AG04450 (cell line): ENCODE measurements at regions of chr6 and their contacts with region 1.

Region 1: GRCh38 chr6:2448820-2449571 is 203.6 kb upstream of the GMDS start:
- DNase-seq: peak; percentile 63
- H3K4me3 ChIP-seq: peak overlapping the region; percentile 41
- H3K27ac ChIP-seq: no peak overlapping the region
- H3K27me3 ChIP-seq: peaks cover 11% of the 10 kb centered on the region
- CTCF ChIP-seq: peak; percentile 83

Region 2: DNA sequence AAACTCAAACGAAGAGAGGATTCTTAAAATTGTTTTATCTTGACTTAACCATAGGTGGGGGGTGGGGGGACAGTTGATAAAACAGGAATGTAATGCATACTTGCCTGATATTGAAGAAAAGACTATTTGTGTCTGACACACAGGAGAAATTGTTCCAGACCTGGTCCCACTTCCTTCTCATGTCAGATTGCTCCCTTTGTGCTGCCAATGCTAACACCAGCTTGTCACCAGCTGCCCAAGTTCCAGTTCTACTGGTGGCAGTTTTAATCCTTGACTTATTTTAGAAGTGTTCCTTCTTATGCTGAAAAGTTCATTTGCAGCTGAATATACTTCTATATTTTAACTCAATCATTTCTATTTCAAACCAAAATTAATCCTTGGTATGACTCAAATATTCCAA is 330.9 kb before region 1 on chr6:
- CTCF ChIA-PET with region 1: interaction called, 10 read pairs
- POLR2A ChIA-PET with region 1: no interaction called
- DNase-seq: no peak
- H3K4me3 ChIP-seq: no peak overlapping the region
- H3K27ac ChIP-seq: no peak overlapping the region
- H3K27me3 ChIP-seq: no peaks in the 10 kb centered on the region
- CTCF ChIP-seq: no peak

Region 3: GRCh38 chr6:2436403-2437154 is 12.4 kb before region 1 on chr6:
- CTCF ChIA-PET with region 1: interaction called, 15 read pairs
- POLR2A ChIA-PET with region 1: no interaction called
- DNase-seq: no peak
- H3K4me3 ChIP-seq: no peak overlapping the region
- H3K27ac ChIP-seq: no peak overlapping the region
- H3K27me3 ChIP-seq: no peaks in the 10 kb centered on the region
- CTCF ChIP-seq: no peak

Region 4: DNA sequence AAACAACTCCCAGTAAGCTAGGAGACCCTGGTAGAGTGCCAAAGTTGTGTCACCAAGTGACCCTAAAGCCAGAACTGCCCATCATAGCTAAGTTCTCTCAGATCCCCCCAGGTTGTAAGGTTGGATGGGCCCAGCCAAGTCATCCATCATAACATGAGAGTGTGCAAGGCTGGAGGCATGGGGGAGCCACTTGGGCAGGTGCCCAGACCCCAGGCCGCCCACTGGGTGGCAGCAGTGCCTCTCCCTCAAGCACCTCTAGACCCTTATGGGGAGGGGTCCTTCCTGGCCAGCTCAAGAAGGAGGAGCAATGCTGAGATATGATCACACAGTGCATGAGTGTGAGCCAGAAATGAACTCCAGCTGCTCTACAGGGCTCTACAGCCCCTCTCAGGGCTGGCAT is 147.2 kb after region 1 on chr6:
- CTCF ChIA-PET with region 1: no interaction called
- POLR2A ChIA-PET with region 1: no interaction called
- DNase-seq: no peak
- H3K4me3 ChIP-seq: no peak overlapping the region
- H3K27ac ChIP-seq: no peak overlapping the region
- H3K27me3 ChIP-seq: peaks cover 8% of the 10 kb centered on the region
- CTCF ChIP-seq: no peak